ENCODE measurements at regions of chr11 and their contacts with region 1.

Region 1: DNA sequence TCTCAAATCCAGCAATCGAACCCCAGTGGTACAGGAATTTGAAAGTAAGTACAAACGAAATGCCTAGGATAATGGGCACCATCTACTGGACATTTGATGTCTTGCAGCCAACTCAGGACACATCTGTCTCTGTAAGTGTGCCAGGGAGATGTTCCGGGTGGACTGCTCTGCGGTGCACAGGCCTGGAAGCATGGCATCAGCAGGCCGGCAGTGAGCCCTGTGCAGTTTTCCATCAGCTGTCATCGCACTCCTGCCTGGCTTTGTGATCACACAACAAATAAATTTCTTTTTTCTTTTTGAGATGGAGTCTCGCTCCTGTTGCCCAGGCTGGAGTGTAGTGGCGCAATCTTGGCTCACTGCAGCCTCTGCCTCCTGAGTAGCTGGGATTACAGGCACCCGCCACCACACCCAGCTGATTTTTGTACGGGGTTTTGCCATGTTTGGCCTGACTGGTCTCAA is 71.0 kb downstream of the JAM3 start:
- DNase-seq: peak; percentile 90
- H3K4me3 ChIP-seq: peak overlapping the region in 2 of 4 donors; percentile 10 to 15
- H3K27ac ChIP-seq: peak overlapping the region; percentile 70 to 82 (median 76)
- H3K4me1 ChIP-seq: peaks cover 0 to 19% (median 9%) of the 10 kb centered on the region in 4 donors
- H3K27me3 ChIP-seq: no peaks in the 10 kb centered on the region
- CTCF ChIP-seq: peak; percentile 90 to 97 (median 93)
- EP300 ChIP-seq: no peak
- POLR2A ChIP-seq: no peak

Region 2: DNA sequence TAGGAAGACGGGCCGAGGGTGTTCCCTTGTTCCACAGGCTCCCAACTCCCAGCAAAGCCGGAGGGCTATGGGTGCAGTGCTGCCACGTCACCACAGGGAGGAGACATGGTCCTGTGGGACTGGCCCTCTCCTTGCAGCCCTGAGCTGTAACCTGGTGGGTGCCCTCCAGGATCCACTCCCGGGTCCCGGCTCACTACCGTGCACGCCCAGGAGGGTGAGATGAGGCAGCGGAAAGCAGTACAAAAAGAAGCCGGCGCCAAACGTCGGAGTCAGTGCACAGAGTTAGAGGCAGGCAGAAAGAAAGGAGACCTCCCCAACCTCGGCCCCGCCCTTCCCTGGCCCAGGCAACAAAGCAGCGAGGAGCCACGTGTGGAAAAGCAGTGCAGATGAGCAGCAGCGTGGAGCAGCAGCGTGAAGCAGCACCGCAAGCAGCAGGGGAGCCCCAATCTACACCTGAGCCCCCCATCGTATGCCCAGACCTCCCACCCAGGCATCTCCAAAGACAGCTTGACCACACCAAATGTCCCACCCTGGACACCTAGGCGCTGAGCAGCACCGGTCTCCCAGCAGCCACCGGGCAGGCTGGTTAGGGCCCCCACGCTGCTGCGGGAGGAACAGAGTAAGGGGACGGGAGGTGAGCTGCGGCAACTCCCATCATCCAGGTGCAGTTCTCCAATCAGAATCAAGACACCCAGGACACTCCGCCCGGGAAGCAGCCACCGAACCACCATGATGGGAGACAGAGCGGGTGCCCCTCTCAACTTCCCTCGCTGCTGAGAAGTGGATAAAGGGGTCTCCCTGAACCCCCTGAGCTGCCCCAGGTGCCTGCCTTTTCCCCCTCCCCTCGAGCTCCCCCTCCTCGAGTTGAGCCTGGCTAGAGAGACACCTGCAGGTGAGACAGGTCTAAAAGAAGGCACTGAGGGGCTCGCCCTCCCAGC is 211.9 kb before region 1 on chr11:
- intact Hi-C with region 1: loop called (anchors 1 kb)
- DNase-seq: peak; percentile 87
- H3K4me3 ChIP-seq: no peak overlapping the region
- H3K27ac ChIP-seq: peak overlapping the region in 3 of 4 donors; percentile 3 to 61 (median 8)
- H3K4me1 ChIP-seq: peaks cover 0 to 24% (median 13%) of the 10 kb centered on the region in 4 donors
- H3K27me3 ChIP-seq: no peaks in the 10 kb centered on the region
- CTCF ChIP-seq: peak; percentile 79 to 96 (median 88)
- EP300 ChIP-seq: no peak
- POLR2A ChIP-seq: no peak

Region 3: DNA sequence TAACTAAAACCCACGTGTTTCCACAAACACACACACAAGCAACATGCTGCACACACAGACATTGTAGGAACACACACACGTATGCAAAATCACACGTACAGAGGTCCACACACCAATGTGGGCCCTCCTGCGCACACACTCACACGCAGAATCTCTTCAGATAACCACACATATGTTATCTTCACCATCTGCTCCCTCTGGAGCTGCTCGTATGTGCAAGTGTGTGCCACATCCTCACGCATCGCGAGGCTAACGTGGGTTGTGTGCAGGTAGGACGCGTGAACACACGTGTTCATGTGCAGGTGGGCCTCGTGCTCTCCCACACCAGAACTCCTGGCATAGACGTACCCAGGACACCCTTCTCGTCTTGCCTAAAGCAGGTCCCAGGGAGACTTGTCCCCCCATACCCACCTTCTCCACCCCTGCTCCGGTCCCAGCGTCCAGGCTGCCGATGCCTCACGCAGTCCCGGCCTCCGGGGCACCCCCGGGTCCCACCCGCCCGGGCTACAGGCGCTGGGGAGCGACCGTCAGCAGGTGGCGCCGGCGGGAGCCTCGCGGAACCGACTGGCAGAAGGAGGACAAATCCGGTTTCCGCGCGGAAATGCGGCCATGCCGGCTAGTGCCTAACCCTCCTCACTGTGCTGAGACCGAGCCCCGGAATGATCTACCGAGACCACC is 172.8 kb before region 1 on chr11:
- intact Hi-C with region 1: loop called (anchors 5 kb)
- DNase-seq: peak; percentile 73
- H3K4me3 ChIP-seq: peak overlapping the region in 2 of 4 donors; percentile 9 to 20
- H3K27ac ChIP-seq: peak overlapping the region; percentile 36 to 78 (median 67)
- H3K4me1 ChIP-seq: peaks cover 0 to 35% (median 31%) of the 10 kb centered on the region in 4 donors
- H3K27me3 ChIP-seq: no peaks in the 10 kb centered on the region
- CTCF ChIP-seq: peak; percentile 17 to 58 (median 35)
- EP300 ChIP-seq: no peak
- POLR2A ChIP-seq: no peak

Region 4: DNA sequence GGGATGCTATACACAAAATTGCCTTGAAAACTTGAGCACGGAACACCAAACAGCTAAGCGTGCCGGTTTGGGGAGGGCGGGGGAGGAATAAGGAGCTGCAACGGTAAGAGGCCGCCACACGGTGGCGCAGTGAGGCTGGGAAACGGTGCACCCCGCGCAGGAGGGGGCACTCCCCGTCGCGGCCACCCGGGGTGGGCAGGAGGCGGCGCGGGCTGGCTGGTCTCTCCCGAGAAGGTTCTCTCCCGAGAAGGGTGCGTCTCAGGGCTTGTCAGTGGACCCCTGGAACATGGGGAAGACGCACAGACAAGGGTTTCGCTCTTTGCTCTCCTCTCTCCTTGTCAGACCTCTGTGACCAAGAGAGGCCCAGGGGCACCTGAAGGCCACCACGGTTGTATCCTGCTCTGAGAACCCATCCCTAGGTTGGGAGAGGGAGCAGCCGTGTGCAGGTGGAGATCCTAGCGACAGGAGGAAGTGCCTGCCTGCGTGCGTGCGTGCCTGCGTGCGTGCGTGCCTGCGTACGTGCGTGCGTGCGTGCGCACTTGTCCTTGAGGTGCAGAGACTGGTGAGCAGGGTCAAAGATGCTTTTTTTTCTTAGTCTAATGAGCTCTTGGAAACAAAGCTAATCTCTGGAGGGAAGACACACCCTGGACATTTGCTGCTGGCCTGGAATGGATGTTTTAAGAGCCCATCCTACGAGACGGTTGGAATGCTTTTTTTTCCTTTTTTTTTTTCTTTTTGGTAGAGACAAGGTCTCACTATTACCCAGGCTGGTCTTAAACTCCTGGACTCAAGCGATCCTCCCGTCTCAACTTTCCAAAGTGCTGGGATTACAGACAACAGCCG is 89.1 kb before region 1 on chr11:
- intact Hi-C with region 1: loop called (anchors 1 kb)
- DNase-seq: peak; percentile 88
- H3K4me3 ChIP-seq: peak overlapping the region in 3 of 4 donors; percentile 30 to 37 (median 31)
- H3K27ac ChIP-seq: peak overlapping the region; percentile 28 to 57 (median 47)
- H3K4me1 ChIP-seq: peaks cover 0 to 33% (median 32%) of the 10 kb centered on the region in 4 donors
- H3K27me3 ChIP-seq: no peaks in the 10 kb centered on the region
- CTCF ChIP-seq: peak; percentile 92 to 96 (median 94)
- EP300 ChIP-seq: no peak
- POLR2A ChIP-seq: no peak

Region 5: DNA sequence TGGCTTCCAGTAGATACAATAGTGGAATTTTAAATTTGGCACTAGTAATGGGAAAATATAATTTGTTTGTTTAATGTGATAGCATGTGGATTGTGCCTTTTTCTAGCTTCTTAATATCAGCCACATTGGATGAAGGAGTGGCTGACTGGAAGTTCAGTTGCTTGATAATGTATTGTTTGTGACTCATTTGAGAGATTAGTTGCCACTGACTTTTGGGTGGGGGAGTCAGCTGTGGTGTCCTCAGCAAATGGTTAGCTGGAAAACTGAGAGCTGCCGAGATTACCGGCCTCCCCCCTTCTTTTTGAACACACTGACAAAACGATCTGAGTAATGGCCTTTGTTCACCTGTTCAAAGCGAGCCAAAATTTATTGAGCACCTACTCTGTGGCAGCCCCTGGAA is 65.6 kb before region 1 on chr11:
- intact Hi-C with region 1: loop called (anchors 2 kb)
- DNase-seq: no peak
- H3K4me3 ChIP-seq: no peak overlapping the region
- H3K27ac ChIP-seq: no peak overlapping the region
- H3K4me1 ChIP-seq: peaks cover 0 to 27% (median 15%) of the 10 kb centered on the region in 4 donors
- H3K27me3 ChIP-seq: no peaks in the 10 kb centered on the region
- CTCF ChIP-seq: no peak
- EP300 ChIP-seq: no peak
- POLR2A ChIP-seq: no peak

Region 6: GRCh38 chr11:134086376-134086775 is 53.5 kb before region 1 on chr11:
- intact Hi-C with region 1: no loop called
- DNase-seq: no peak
- H3K4me3 ChIP-seq: no peak overlapping the region
- H3K27ac ChIP-seq: no peak overlapping the region
- H3K4me1 ChIP-seq: no peaks in the 10 kb centered on the region
- H3K27me3 ChIP-seq: no peaks in the 10 kb centered on the region
- CTCF ChIP-seq: no peak
- EP300 ChIP-seq: no peak
- POLR2A ChIP-seq: no peak

Measured in sigmoid colon (tissue), 7 donors.